A549 (cell line): ENCODE measurements at regions of chr10 and their contacts with region 1.

Region 1: DNA sequence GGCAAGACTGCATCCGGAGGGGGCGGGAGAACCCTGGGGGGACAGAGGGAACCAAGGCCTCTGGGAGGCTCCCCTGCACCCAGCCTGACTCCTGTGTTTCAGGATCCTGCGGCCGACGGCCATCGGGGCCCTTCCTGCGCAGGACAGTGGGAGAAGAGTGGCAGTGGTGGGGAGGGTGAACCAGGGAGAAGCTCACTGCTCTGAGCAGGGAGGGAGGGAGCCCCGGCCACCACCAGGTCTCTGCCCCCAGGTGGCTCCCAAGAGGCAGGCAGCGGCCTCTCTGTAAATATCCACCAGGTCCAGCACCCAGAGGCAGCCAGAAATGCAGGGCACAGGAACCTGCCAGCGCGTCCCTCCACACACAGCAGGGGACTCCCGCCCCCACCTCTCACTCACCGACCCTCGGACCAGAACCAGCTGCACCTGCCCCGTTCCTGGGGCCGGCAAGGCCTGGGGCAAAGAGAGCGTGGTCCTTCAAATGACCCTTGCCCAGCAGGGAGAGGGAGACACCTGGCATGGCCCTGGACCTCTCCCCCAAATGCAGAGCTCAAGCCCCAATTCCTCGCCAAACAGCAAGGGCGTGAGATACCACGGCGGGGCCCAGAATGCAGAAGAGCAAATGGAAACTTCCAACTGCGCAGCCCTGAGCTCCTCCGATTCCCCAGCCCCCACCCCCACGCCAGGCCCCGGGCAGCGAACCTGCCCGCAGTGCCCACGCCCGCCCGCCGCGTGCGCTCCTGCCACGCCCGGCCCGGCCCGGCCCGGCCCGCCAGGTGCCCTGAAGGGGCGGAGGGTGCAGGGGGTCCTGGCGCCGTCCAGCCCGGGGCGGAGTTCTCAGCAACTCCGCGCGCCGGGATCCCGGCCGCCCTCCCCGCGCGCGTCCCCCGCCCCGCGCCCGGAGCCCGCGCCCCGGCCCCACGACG is 805 bp downstream of the RASGEF1A start:
- DNase-seq: peak; percentile 77 to 96
- ATAC-seq: peak; percentile 88 to 94
- H3K4me3 ChIP-seq: peak overlapping the region; percentile 67
- H3K27ac ChIP-seq: peak overlapping the region; percentile 75 to 85
- H3K4me1 ChIP-seq: peaks cover 13% of the 10 kb centered on the region; the same call in 1 of the 3 replicates
- CTCF ChIP-seq: peak; percentile 53
- EP300 ChIP-seq: no peak
- POLR2A ChIP-seq: no peak
- RAD21 ChIP-seq: peak; percentile 69 to 72

Region 2: DNA sequence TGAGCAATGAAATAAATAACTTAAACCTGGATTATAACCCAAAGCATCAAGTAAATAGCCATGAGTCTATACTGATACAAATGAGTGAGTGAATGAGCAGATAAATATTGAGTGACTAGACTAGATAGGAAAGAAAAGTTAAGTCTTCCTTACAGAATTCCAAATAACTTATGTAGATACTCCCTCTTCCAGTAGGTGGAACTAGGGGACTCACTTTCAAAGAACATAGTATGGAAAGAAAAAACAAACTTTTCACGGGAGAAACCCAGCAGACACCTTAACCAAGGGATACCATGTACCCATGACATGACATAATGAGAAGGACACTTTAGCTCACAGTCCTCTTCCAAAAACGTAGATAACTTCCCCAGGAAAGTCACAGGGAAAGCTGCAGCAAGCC is 95.6 kb before region 1 on chr10:
- CTCF ChIA-PET with region 1: no interaction called
- POLR2A ChIA-PET with region 1: no interaction called
- DNase-seq: peak in 1 of 2 experiments; percentile 22
- ATAC-seq: peak; percentile 67 to 70; a peak in 5 of 6 replicates
- H3K4me3 ChIP-seq: no peak overlapping the region
- H3K27ac ChIP-seq: no peak overlapping the region
- H3K4me1 ChIP-seq: no peaks in the 10 kb centered on the region
- CTCF ChIP-seq: no peak; the same call in 2 of the 3 replicates
- EP300 ChIP-seq: no peak
- POLR2A ChIP-seq: no peak
- RAD21 ChIP-seq: peak in 1 of 2 experiments; percentile 31; a peak in 2 of 5 replicates

Region 3: GRCh38 chr10:43204943-43205671 is 61.0 kb before region 1 on chr10:
- CTCF ChIA-PET with region 1: interaction called, 10 read pairs
- POLR2A ChIA-PET with region 1: no interaction called
- DNase-seq: peak; percentile 68 to 81
- ATAC-seq: peak; percentile 78 to 86
- H3K4me3 ChIP-seq: no peak overlapping the region
- H3K27ac ChIP-seq: peak overlapping the region in 1 of 2 experiments; percentile 10; a peak in 1 of 6 replicates
- H3K4me1 ChIP-seq: no peaks in the 10 kb centered on the region
- CTCF ChIP-seq: peak; percentile 83
- EP300 ChIP-seq: no peak
- POLR2A ChIP-seq: no peak
- RAD21 ChIP-seq: peak; percentile 46 to 56

Region 4: GRCh38 chr10:43304687-43305340 is 38.8 kb after region 1 on chr10:
- CTCF ChIA-PET with region 1: interaction called, 20 read pairs
- POLR2A ChIA-PET with region 1: no interaction called
- DNase-seq: peak; percentile 43 to 46
- ATAC-seq: peak; percentile 80
- H3K4me3 ChIP-seq: peak overlapping the region; percentile 39
- H3K27ac ChIP-seq: peak overlapping the region; percentile 63 to 86
- H3K4me1 ChIP-seq: peaks cover 19% of the 10 kb centered on the region
- CTCF ChIP-seq: no peak
- EP300 ChIP-seq: no peak
- POLR2A ChIP-seq: no peak
- RAD21 ChIP-seq: no peak

Region 5: DNA sequence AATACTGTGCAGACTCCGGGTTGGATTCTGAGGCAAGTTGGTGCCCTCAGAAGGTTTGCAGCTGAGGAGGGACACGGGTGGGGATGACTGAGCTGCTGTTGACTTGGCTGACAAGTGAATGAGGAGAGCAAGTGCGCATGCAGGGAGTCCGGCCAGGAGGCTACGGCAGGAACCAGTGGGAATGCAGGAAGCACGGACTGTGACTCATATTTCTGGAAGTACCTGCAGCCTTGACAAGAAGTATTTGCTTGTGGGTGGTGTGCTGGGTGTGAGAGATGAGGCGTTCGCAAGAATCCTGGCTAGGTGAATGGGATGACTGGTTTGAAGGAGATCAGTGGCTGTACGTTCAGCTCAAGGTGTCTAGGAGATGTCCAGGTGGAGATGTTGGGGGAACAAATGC is 74.6 kb after region 1 on chr10:
- CTCF ChIA-PET with region 1: interaction called, 11 read pairs
- POLR2A ChIA-PET with region 1: no interaction called
- DNase-seq: peak; percentile 89 to 90
- ATAC-seq: peak; percentile 66 to 72
- H3K4me3 ChIP-seq: no peak overlapping the region
- H3K27ac ChIP-seq: peak overlapping the region; percentile 88 to 91
- H3K4me1 ChIP-seq: peaks cover 78% of the 10 kb centered on the region
- CTCF ChIP-seq: no peak
- EP300 ChIP-seq: no peak
- POLR2A ChIP-seq: no peak
- RAD21 ChIP-seq: no peak

Region 6: DNA sequence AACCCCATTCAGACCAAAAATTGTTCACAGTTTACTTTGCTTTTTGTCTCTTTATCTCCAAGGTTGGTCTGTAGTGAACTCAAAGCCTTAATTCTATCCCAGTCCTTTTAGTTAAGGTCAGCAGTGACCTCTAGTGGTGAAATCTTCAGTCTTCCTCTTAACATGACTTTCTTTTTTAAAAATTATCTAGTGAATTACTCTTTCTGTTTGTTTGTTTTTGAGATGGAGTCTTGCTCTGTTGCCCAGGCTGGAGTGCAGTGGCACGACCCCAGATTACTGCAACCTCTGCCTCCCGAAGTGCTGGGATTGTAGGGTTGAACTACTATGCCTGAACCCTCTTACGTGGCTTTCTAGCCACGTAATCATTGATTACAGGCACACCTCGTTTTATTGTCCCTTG is 195.9 kb after region 1 on chr10:
- CTCF ChIA-PET with region 1: interaction called, 13 read pairs
- POLR2A ChIA-PET with region 1: no interaction called
- DNase-seq: peak; percentile 55 to 86
- ATAC-seq: peak; percentile 89 to 91
- H3K4me3 ChIP-seq: no peak overlapping the region
- H3K27ac ChIP-seq: no peak overlapping the region
- H3K4me1 ChIP-seq: peaks cover 5% of the 10 kb centered on the region; the same call in 1 of the 3 replicates
- CTCF ChIP-seq: peak; percentile 89
- EP300 ChIP-seq: no peak
- POLR2A ChIP-seq: no peak
- RAD21 ChIP-seq: peak; percentile 80 to 81